HEK293 (cell line): ENCODE measurements at regions of chr22 and their contacts with region 1.

Region 1: DNA sequence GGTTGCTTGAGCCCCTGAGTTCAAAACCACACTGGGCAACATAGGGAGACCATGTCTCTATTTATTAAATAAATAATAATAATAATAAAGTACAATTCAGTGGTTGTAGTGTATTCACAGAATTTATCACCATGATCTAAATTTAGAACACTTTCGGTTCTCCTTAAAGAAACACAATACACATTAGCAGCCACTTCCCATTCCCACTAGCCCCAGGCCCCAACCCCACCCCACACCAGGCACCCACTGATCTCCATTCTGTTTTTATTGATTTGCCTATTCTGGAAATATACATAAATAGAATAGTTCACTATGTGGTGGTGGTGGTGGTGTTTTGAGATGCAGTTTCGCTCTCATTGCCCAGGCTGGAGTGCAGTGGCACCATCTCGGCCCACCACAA is 45.7 kb downstream of the BCL2L13 start:
- H3K4me3 ChIP-seq: no peak overlapping the region
- H3K27ac ChIP-seq: no peak overlapping the region
- H3K4me1 ChIP-seq: no peaks in the 10 kb centered on the region
- CTCF ChIP-seq: no peak

Region 2: DNA sequence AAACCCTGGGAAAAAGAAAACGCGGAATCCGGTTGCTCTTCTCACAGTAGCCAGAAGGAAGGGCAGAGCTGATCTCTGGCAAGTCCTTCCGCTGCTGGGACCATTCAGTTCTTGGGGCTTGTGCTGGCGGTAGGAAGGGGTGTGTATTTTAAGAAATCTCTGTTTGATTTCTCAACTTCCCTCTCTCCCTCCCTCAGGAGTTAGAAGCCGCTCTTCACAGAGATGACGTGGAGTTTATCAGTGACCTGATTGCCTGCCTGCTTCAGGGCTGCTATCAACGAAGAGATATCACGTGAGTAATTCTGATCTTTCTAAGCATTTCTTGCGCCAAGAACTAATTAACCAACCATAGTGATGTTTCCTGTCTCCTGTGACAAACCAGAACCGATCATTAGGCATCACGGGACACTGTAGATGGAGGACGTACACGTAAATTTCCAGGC is 206.8 kb before region 1 on chr22:
- CTCF ChIA-PET with region 1: no interaction called
- POLR2A ChIA-PET with region 1: interaction called, 10 read pairs
- H3K4me3 ChIP-seq: no peak overlapping the region
- H3K27ac ChIP-seq: peak overlapping the region; percentile 54
- H3K4me1 ChIP-seq: peaks cover 17% of the 10 kb centered on the region
- CTCF ChIP-seq: no peak

Region 3: DNA sequence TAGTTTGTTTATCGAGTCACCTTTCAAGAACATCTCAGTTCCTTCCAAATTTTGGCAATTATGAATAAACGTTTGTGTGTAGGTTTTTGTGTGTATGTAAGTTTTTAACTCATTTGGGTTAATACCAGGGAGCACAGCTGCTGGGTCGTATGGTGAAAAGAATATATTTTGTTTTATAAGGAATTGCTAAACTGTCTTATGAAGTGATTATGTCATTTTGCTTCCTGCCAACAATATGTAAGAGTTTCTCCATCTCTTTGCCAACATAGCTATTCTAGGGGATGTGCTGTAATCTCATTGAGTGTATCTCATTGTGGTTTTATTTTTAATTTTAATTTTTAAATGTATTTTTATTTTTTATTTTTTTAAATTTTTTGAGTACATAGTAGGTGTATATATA is 18.4 kb before region 1 on chr22:
- CTCF ChIA-PET with region 1: no interaction called
- POLR2A ChIA-PET with region 1: no interaction called
- H3K4me3 ChIP-seq: no peak overlapping the region
- H3K27ac ChIP-seq: no peak overlapping the region
- H3K4me1 ChIP-seq: no peaks in the 10 kb centered on the region
- CTCF ChIP-seq: no peak

Region 4: DNA sequence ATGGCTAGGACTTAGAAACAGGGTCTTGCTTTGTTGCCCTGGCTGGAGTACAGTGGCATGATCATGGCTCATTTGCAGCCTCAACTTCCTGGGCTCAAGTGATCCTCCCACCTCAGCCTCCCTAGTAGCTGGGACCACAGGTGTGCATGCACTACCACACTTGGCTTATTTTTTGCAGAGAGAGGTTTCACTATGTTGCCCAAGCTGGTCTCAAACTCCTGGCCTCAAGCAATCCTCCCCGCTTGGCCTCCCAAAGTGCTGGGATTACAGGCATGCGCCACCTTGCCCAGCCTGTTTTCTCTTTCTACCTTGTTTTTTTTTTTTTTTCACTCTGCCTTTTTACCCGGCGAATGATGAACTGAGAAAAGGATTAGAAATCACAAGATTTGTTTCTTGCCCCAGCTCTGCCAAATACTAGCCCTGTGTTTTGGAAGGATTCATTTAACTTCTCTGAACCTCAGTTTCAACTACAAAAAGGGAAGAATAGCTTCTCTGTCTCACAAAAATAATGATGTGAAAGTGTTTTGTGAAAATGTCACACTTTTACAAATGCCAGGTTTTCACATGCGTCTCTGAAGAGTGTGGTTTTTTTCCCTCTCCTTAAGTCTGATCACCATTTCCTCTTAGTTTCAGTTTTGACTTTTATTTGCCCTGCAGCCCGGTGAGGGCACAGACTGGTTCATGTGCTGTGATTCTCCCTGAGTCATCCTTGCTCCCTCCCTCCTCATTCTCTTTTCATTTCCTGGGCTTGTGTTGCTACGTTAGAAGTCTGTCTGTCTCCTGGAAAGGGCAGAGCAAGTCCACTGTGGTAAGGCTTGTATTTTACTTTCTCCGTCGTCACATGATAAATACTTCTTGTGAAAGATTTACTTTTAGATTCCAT is 22.0 kb after region 1 on chr22:
- CTCF ChIA-PET with region 1: no interaction called
- POLR2A ChIA-PET with region 1: no interaction called
- H3K4me3 ChIP-seq: no peak overlapping the region
- H3K27ac ChIP-seq: no peak overlapping the region
- H3K4me1 ChIP-seq: peaks cover 14% of the 10 kb centered on the region; the same call in 1 of the 2 replicates
- CTCF ChIP-seq: no peak

Region 5: GRCh38 chr22:17726464-17727246 is 42.4 kb after region 1 on chr22:
- CTCF ChIA-PET with region 1: no interaction called
- POLR2A ChIA-PET with region 1: no interaction called
- H3K4me3 ChIP-seq: no peak overlapping the region
- H3K27ac ChIP-seq: no peak overlapping the region
- H3K4me1 ChIP-seq: 0 out of 2 replicates have a peak, but pooled peaks cover 4% of the 10 kb centered on the region
- CTCF ChIP-seq: no peak